CD4-positive, alpha-beta T cell (primary cell): ENCODE measurements at regions of chr11 and their contacts with region 1.

Region 1: GRCh38 chr11:45354976-45355705 is 69.0 kb upstream of the SYT13 start:
- DNase-seq: peak; percentile 82 to 95 (median 90)
- ATAC-seq: peak; percentile 92
- H3K4me3 ChIP-seq: peak overlapping the region; percentile 79
- H3K4me3 Mint-ChIP-seq: peak overlapping the region; percentile 84
- H3K27ac ChIP-seq: peak overlapping the region; percentile 43 to 52
- H3K27ac Mint-ChIP-seq: peak overlapping the region; percentile 57
- H3K4me1 ChIP-seq: peaks cover 17% of the 10 kb centered on the region
- H3K4me1 Mint-ChIP-seq: peaks cover 22% of the 10 kb centered on the region
- H3K27me3 ChIP-seq: no peaks in the 10 kb centered on the region
- H3K27me3 Mint-ChIP-seq: peaks cover 9% of the 10 kb centered on the region
- CTCF ChIP-seq: no peak

Region 2: DNA sequence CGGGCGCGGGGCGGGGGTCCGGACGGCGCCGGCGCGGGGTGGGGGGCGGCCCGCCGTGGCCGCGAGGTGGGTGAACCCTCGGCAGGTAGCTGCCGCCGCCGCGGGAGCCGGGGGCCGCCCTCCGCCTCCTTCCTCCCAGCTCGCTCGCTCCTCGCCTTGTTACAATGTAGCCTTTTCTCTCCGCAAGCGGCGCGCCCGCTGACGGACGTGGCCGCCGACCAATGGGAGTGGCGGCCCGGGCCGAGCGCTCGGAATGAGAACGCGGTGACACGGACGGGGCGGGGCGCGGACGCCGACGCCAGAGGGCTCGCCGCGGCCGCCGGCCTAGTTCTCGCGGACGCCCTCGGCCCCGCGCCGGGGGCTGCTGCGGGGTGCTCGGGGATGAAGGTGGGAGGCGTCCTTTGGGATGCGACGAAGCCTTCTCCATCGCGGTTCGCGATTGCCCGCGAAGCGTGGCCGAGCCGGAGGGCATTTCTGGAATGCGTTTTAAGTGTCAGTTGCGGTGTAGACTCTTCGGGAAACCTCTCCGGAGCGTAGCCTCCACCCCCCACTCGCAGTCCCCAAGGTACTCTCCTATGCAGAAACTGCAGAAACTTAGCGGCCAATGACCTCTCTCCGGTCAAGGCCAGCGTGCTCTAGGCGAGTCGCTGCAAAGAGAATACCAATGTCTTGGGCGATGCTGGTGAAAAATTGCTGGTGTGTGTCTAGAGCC is 208.0 kb before region 1 on chr11:
- CTCF ChIA-PET with region 1: no interaction called
- POLR2A ChIA-PET with region 1: no interaction called
- intact Hi-C with region 1: loop called in 1 of 2 experiments (anchors 2 kb)
- DNase-seq: peak; percentile 82 to 96 (median 91)
- ATAC-seq: peak; percentile 97
- H3K4me3 ChIP-seq: peak overlapping the region; percentile 72
- H3K4me3 Mint-ChIP-seq: peak overlapping the region; percentile 96
- H3K27ac ChIP-seq: peak overlapping the region; percentile 37 to 49
- H3K27ac Mint-ChIP-seq: peak overlapping the region; percentile 70
- H3K4me1 ChIP-seq: peaks cover 23% of the 10 kb centered on the region
- H3K4me1 Mint-ChIP-seq: peaks cover 39% of the 10 kb centered on the region
- H3K27me3 ChIP-seq: peaks cover 0 to 10% of the 10 kb centered on the region in 2 experiments
- H3K27me3 Mint-ChIP-seq: peaks cover 24% of the 10 kb centered on the region
- CTCF ChIP-seq: no peak

Region 3: DNA sequence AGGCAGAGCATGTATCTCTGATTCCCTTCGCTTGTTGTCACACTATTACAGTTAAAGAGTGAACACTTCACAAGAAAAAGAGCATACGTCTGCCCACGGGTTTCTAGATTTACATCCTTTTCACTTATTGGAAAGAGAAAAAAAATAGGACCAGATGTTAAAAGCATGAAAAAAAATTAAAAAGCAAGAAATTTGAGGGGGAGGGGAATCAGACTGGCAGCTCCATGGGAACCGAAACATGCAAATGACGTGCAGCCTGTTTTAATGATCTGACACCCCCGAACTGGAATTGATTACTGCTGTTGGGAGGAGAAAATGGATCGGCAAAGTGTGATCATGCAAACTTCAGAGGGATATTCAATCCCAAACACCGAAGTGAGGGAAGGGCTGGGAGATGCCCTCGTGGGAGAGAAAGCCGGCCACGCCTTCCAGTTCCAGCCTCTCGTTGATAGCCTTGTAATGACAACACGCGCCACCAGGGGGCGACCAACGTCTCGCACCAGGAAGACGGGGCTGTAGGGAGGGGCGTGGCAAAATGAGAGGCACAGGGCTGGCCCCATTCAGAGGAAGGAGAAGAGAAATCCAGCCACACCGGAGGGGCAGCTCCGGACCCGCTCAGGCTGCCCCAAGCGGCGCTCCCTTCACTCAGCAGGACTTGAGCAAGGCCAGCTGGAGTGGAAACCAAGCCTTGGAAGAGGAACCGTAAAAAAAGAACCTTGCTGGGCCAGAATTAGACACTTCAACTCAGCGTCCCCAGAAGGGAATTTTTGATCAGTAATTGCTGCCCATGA is 15.2 kb before region 1 on chr11:
- CTCF ChIA-PET with region 1: interaction called, 8 read pairs
- POLR2A ChIA-PET with region 1: interaction called, 3 read pairs
- intact Hi-C with region 1: loop called in 1 of 2 experiments (anchors 2 kb)
- DNase-seq: peak; percentile 86 to 97 (median 90)
- ATAC-seq: peak; percentile 100
- H3K4me3 ChIP-seq: peak overlapping the region; percentile 33
- H3K4me3 Mint-ChIP-seq: peak overlapping the region; percentile 49
- H3K27ac ChIP-seq: no peak overlapping the region
- H3K27ac Mint-ChIP-seq: no peak overlapping the region
- H3K4me1 ChIP-seq: peaks cover 9% of the 10 kb centered on the region
- H3K4me1 Mint-ChIP-seq: peaks cover 11% of the 10 kb centered on the region
- H3K27me3 ChIP-seq: peaks cover 0 to 4% of the 10 kb centered on the region in 2 experiments
- H3K27me3 Mint-ChIP-seq: peaks cover 20% of the 10 kb centered on the region
- CTCF ChIP-seq: peak; percentile 99

Region 4: GRCh38 chr11:45617871-45618601 is 262.9 kb after region 1 on chr11:
- CTCF ChIA-PET with region 1: no interaction called
- POLR2A ChIA-PET with region 1: no interaction called
- intact Hi-C with region 1: no loop called
- DNase-seq: no peak
- ATAC-seq: no peak
- H3K4me3 ChIP-seq: no peak overlapping the region
- H3K4me3 Mint-ChIP-seq: no peak overlapping the region
- H3K27ac ChIP-seq: no peak overlapping the region
- H3K27ac Mint-ChIP-seq: no peak overlapping the region
- H3K4me1 ChIP-seq: no peaks in the 10 kb centered on the region
- H3K4me1 Mint-ChIP-seq: no peaks in the 10 kb centered on the region
- H3K27me3 ChIP-seq: peaks cover 9 to 15% of the 10 kb centered on the region in 2 experiments
- H3K27me3 Mint-ChIP-seq: peaks cover 40% of the 10 kb centered on the region
- CTCF ChIP-seq: no peak